Body of pancreas (tissue), 4 donors: ENCODE measurements at regions of chr6 and their contacts with region 1.

Region 1: DNA sequence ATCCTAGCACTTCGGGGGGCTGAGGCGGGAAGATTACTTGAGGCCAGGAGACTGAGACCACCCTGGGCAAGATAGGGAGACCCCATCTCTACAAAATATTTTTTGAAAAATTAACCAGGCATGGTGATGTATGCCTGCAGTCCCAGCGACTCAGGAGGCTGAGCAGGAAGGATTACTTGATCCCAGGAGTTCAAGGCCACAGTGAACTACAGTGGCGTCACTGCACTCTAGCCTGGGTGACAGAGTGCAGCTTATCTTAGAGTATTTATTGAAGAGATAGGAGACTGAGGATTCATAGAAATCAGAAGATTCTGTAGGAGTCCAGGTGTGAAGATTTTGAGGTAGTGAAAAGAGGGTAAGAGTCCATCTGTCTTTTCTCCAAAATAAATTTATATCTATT is 45.0 kb downstream of the SLC17A5 start:
- DNase-seq: no peak
- ATAC-seq: no peak
- H3K4me3 ChIP-seq: no peak overlapping the region
- H3K27ac ChIP-seq: no peak overlapping the region
- H3K4me1 ChIP-seq: no peaks in the 10 kb centered on the region
- H3K27me3 ChIP-seq: no peaks in the 10 kb centered on the region
- CTCF ChIP-seq: no peak
- POLR2A ChIP-seq: no peak

Region 2: GRCh38 chr6:73519926-73520687 is 88.7 kb before region 1 on chr6:
- intact Hi-C with region 1: loop called (anchors 5 kb)
- DNase-seq: peak; percentile 66 to 75 (median 71)
- ATAC-seq: peak; percentile 16
- H3K4me3 ChIP-seq: peak overlapping the region; percentile 92 to 97
- H3K27ac ChIP-seq: peak overlapping the region; percentile 97 to 100 (median 100)
- H3K4me1 ChIP-seq: peaks cover 60% of the 10 kb centered on the region
- H3K27me3 ChIP-seq: no peaks in the 10 kb centered on the region
- CTCF ChIP-seq: no peak
- POLR2A ChIP-seq: no peak